CD4-positive, alpha-beta memory T cell (primary cell): ENCODE measurements at regions of chr11 and their contacts with region 1.

Region 1: GRCh38 chr11:22787551-22788162 is 41.9 kb downstream of the SVIP start:
- DNase-seq: peak in 4 of 5 donors; percentile 26 to 42 (median 40)
- H3K4me3 ChIP-seq: no peak overlapping the region
- H3K4me3 Mint-ChIP-seq: no peak overlapping the region
- H3K27ac ChIP-seq: no peak overlapping the region
- H3K27ac Mint-ChIP-seq: no peak overlapping the region
- H3K4me1 ChIP-seq: no peaks in the 10 kb centered on the region
- H3K4me1 Mint-ChIP-seq: no peaks in the 10 kb centered on the region
- H3K27me3 ChIP-seq: no peaks in the 10 kb centered on the region
- H3K27me3 Mint-ChIP-seq: peaks cover 7 to 9% of the 10 kb centered on the region in 2 donors

Region 2: DNA sequence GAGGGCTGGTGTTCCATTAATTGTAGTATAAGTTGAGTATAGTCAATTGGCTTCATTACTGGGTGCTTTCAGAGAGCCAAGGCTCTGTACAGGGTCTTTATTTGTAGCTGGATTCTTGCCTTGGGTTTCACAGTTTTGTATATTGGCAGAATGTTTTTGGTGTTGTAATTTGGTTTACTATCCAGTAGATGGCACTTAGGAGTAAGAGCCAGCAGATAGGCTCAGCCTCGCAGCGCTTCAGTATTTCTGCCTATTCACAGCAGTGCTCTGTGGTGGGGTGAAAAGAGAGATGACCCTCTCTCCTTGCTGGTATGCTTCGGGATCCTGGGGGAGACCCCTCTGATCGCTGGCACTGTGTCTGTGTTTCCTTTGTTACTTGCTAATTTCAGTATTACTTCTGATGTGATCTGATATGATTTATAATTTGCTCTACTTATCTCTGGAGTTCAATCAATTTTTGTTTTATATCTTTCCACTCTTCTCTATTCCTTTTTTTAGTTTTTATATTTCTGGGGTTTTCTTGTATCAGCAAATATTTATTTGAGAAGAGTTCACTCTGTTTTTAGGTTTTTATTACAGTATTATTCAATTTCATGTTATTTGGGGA is 542.6 kb before region 1 on chr11:
- CTCF ChIA-PET with region 1: interaction called, 11 read pairs
- POLR2A ChIA-PET with region 1: no interaction called
- intact Hi-C with region 1: no loop called
- DNase-seq: peak in 3 of 5 donors; percentile 9 to 13 (median 11)
- H3K4me3 ChIP-seq: no peak overlapping the region
- H3K4me3 Mint-ChIP-seq: no peak overlapping the region
- H3K27ac ChIP-seq: no peak overlapping the region
- H3K27ac Mint-ChIP-seq: no peak overlapping the region
- H3K4me1 ChIP-seq: no peaks in the 10 kb centered on the region
- H3K4me1 Mint-ChIP-seq: no peaks in the 10 kb centered on the region
- H3K27me3 ChIP-seq: no peaks in the 10 kb centered on the region
- H3K27me3 Mint-ChIP-seq: peaks cover 5 to 8% of the 10 kb centered on the region in 2 donors

Region 3: DNA sequence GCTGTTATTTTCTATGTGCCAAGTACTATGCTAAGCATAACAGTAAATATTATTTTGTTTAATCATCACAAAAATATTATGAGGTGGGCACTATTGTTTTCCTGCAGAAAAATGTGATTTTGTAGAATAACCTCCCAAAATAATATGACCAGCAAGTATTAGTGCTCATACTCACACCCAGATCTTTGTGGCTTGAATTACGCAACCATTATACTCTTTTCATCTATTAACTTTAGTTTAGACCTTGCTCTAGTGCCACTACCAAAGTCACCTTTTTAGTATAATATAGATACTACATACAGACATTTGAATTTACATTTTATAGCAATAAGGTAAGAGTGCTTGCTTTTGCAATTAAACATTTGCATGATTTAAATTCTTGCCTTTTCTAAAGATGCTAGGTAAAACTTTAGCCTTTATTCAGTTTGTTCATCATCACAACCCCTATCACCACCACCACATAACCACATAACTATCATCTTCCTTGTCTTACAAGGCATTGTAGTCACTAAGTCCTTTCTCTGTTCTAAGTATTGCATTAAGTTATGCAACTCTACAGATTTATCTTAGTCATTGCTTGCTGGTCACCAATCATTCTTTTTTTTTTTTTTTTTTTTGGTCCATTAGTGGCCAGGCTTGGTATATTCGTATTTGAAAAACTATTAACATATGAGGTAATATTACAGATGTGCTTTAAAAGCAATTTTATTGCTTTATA is 52.9 kb before region 1 on chr11:
- CTCF ChIA-PET with region 1: no interaction called
- POLR2A ChIA-PET with region 1: no interaction called
- intact Hi-C with region 1: no loop called
- DNase-seq: no peak
- H3K4me3 ChIP-seq: no peak overlapping the region
- H3K4me3 Mint-ChIP-seq: no peak overlapping the region
- H3K27ac ChIP-seq: no peak overlapping the region
- H3K27ac Mint-ChIP-seq: no peak overlapping the region
- H3K4me1 ChIP-seq: no peaks in the 10 kb centered on the region
- H3K4me1 Mint-ChIP-seq: no peaks in the 10 kb centered on the region
- H3K27me3 ChIP-seq: no peaks in the 10 kb centered on the region
- H3K27me3 Mint-ChIP-seq: peaks cover 1 to 2% of the 10 kb centered on the region in 2 donors

Region 4: GRCh38 chr11:22798901-22799300 is 11.2 kb after region 1 on chr11:
- CTCF ChIA-PET with region 1: interaction called, 10 read pairs
- POLR2A ChIA-PET with region 1: no interaction called
- intact Hi-C with region 1: no loop called
- DNase-seq: no peak
- H3K4me3 ChIP-seq: no peak overlapping the region
- H3K4me3 Mint-ChIP-seq: no peak overlapping the region
- H3K27ac ChIP-seq: no peak overlapping the region
- H3K27ac Mint-ChIP-seq: no peak overlapping the region
- H3K4me1 ChIP-seq: no peaks in the 10 kb centered on the region
- H3K4me1 Mint-ChIP-seq: peaks cover 0 to 1% (median 0%) of the 10 kb centered on the region in 4 donors
- H3K27me3 ChIP-seq: no peaks in the 10 kb centered on the region
- H3K27me3 Mint-ChIP-seq: peaks cover 3 to 10% of the 10 kb centered on the region in 2 donors

Region 5: GRCh38 chr11:22879630-22880029 is 92.0 kb after region 1 on chr11:
- CTCF ChIA-PET with region 1: no interaction called
- POLR2A ChIA-PET with region 1: no interaction called
- intact Hi-C with region 1: no loop called
- DNase-seq: no peak
- H3K4me3 ChIP-seq: no peak overlapping the region
- H3K4me3 Mint-ChIP-seq: no peak overlapping the region
- H3K27ac ChIP-seq: no peak overlapping the region
- H3K27ac Mint-ChIP-seq: no peak overlapping the region
- H3K4me1 ChIP-seq: no peaks in the 10 kb centered on the region
- H3K4me1 Mint-ChIP-seq: no peaks in the 10 kb centered on the region
- H3K27me3 ChIP-seq: no peaks in the 10 kb centered on the region
- H3K27me3 Mint-ChIP-seq: no peaks in the 10 kb centered on the region